ENCODE measurements at regions of chr21 and their contacts with region 1.

Region 1: DNA sequence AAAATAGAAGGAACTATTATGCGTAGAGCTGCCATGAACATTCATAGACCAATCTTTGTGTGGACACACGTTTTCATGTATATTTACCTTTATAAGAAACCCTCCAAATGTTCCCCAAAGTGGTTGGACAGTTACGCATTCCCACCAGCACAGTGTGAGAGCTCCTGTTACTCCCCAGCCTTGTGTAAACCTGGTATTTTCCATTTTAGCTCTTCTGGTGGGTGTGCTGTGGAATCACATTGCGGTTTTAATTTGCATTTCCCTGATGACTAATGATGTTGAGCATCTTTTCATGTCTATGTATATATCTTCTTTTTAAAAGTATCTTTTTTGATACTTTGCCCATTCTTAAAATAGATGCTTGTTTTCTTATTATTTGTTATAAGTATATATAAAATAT is 3.2 kb upstream of the UBASH3A start:
- DNase-seq: no peak
- ATAC-seq: no peak
- H3K4me3 Mint-ChIP-seq: no peak overlapping the region
- H3K27ac Mint-ChIP-seq: no peak overlapping the region
- H3K4me1 Mint-ChIP-seq: peaks cover 43% of the 10 kb centered on the region
- H3K27me3 Mint-ChIP-seq: no peaks in the 10 kb centered on the region

Region 2: DNA sequence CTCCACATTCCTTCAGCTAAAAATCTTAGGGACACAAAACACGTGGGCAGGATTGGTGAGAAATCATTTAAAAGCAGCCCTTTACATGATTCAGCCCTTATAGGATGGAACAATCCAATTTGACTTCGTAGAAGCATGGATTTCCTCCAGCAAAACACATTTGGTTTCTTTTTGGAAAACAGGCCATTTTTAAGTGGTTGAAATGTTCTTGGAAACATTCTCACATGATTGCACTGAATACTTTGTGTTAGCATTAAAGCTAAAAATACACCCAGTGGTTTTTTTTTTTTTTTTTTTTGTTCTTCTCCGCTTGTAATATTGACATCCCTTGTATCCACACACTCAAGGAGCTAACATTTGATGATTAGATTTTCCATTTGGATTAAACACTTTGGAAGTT is 223.7 kb before region 1 on chr21:
- POLR2A ChIA-PET with region 1: no interaction called
- DNase-seq: no peak
- ATAC-seq: no peak
- H3K4me3 Mint-ChIP-seq: no peak overlapping the region
- H3K27ac Mint-ChIP-seq: no peak overlapping the region
- H3K4me1 Mint-ChIP-seq: no peaks in the 10 kb centered on the region
- H3K27me3 Mint-ChIP-seq: peaks cover 12% of the 10 kb centered on the region

Region 3: GRCh38 chr21:42414928-42415769 is 14.6 kb after region 1 on chr21:
- POLR2A ChIA-PET with region 1: interaction called, 182 read pairs
- DNase-seq: peak; percentile 76
- ATAC-seq: peak; percentile 78
- H3K4me3 Mint-ChIP-seq: peak overlapping the region; percentile 78
- H3K27ac Mint-ChIP-seq: peak overlapping the region; percentile 95
- H3K4me1 Mint-ChIP-seq: peaks cover 50% of the 10 kb centered on the region
- H3K27me3 Mint-ChIP-seq: no peaks in the 10 kb centered on the region